SK-N-SH (cell line): ENCODE measurements at regions of chr7 and their contacts with region 1.

Region 1: GRCh38 chr7:155356323-155357105 is 58.8 kb downstream of the INSIG1 start:
- DNase-seq: peak; percentile 67
- H3K4me3 ChIP-seq: no peak overlapping the region; a peak in 1 of 4 replicates
- H3K27ac ChIP-seq: no peak overlapping the region
- H3K4me1 ChIP-seq: peaks cover 0 to 5% of the 10 kb centered on the region in 2 experiments; a peak in 1 of 4 replicates
- H3K27me3 ChIP-seq: peaks cover 49% of the 10 kb centered on the region
- CTCF ChIP-seq: peak; percentile 60
- EP300 ChIP-seq: no peak
- RAD21 ChIP-seq: peak; percentile 34; the same call in 1 of the 2 replicates

Region 2: DNA sequence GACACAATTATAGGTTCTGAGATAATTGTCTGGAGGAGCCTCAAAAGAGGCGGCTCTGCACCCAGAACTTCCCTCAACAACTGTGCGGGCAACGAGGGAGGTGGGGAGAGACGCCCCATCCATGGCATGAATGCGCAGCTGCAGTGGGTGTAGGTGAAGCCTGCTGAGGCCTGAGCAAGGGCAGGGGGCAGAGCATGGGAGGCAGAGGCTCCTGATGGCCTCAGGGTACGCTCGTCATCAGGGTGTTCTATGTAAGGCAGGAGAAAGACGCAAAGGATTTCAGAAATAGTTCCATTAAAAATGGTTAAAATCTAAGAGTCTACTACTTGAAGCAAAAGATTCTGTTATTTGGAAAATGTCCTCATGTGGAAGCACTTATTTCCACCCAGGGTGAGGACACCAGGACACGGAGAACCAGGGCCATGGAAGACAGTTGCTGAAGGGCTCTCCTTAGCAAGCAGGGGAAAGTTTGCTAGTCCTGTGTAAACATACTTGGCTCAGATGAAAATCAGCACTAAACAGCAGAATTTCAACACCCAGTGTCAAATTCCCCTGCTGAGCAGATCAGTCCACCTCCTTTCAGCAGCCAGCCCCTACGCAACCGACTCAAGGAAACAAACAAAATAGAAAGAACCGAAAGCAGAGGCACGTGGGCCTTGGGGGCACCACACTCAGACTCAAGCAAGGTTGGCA is 39.9 kb before region 1 on chr7:
- CTCF ChIA-PET with region 1: no interaction called
- POLR2A ChIA-PET with region 1: no interaction called
- DNase-seq: no peak
- H3K4me3 ChIP-seq: no peak overlapping the region
- H3K27ac ChIP-seq: no peak overlapping the region
- H3K4me1 ChIP-seq: no peaks in the 10 kb centered on the region
- H3K27me3 ChIP-seq: no peaks in the 10 kb centered on the region
- CTCF ChIP-seq: no peak
- EP300 ChIP-seq: no peak
- RAD21 ChIP-seq: no peak

Region 3: DNA sequence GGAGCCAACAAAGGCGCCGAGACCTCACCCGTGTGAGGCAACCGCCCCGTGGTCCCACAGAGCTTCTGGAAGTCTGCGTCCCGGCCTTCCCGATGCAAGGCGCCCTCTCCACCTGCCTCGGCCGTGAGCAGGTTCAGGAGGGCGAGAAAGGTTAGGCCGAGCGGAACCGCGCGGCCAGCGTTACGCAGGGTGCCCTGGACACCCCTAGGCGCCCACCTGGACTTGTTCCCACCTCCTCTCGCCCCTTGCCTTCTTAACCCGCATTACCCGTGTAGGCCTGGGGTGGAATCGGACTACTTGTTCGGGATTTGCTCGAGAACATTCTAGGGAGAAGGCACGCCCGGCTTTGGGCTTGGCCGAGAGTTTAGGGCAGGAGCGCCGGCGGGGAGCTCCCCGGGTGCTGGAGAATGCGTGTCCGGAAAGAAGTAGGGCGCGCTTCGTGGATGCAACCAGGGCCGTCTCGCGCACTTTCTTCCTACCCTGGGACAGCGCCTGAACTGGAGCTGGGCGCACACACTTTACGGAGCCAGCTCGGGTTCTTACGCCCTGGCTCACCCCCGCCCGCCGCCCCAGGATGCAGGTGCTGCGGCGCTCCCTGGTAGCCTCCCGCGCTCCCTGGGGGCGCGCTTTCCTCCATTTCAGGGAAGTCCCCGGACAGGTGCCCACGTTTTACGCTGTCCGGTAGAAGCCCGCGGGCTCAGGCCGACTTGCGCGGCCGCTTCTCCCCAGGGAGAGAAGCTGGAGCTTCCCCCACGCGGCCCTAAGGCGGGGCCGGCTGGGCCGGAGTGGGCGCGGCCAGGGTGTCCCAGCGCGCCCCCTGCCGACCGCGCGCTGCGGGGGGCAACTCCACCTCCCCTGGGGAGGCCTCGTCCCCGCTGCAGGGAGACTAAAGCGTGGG is 15.6 kb after region 1 on chr7:
- CTCF ChIA-PET with region 1: interaction called, 13 read pairs
- POLR2A ChIA-PET with region 1: no interaction called
- DNase-seq: peak; percentile 68
- H3K4me3 ChIP-seq: no peak overlapping the region
- H3K27ac ChIP-seq: no peak overlapping the region
- H3K4me1 ChIP-seq: no peaks in the 10 kb centered on the region
- H3K27me3 ChIP-seq: peaks cover 81% of the 10 kb centered on the region
- CTCF ChIP-seq: peak; percentile 46
- EP300 ChIP-seq: no peak
- RAD21 ChIP-seq: no peak

Region 4: DNA sequence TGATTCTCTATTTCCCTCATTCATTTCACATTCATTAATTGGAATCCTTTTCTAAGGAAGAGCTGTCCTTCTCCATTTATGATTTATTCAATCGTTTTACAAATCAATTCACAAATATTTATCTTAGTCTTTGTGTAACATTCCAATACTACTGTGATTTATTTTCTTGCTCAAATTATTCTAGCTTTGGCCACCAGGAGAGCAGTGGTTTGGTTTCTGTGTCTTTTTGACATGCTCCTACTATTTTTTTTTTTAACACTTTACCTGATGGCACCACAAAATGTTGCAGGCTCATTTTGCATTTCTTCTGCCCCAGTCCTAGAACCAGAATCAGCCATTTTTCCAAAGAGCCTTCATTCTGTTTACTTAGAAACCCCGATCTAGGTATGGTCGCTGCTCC is 274.6 kb after region 1 on chr7:
- CTCF ChIA-PET with region 1: no interaction called
- POLR2A ChIA-PET with region 1: no interaction called
- DNase-seq: no peak
- H3K4me3 ChIP-seq: no peak overlapping the region
- H3K27ac ChIP-seq: no peak overlapping the region
- H3K4me1 ChIP-seq: no peaks in the 10 kb centered on the region
- H3K27me3 ChIP-seq: no peaks in the 10 kb centered on the region
- CTCF ChIP-seq: peak; percentile 34; the same call in 1 of the 2 replicates
- EP300 ChIP-seq: no peak
- RAD21 ChIP-seq: no peak